Left ventricle myocardium inferior (tissue), 1 donor: ENCODE measurements at regions of chr19 and their contacts with region 1.

Region 1: GRCh38 chr19:39187559-39187957 is 9.2 kb upstream of the NCCRP1 start:
- DNase-seq: no peak
- H3K4me3 ChIP-seq: no peak overlapping the region
- H3K27ac ChIP-seq: no peak overlapping the region
- H3K4me1 ChIP-seq: peaks cover 5% of the 10 kb centered on the region
- H3K27me3 ChIP-seq: peaks cover 57% of the 10 kb centered on the region
- CTCF ChIP-seq: no peak

Region 2: DNA sequence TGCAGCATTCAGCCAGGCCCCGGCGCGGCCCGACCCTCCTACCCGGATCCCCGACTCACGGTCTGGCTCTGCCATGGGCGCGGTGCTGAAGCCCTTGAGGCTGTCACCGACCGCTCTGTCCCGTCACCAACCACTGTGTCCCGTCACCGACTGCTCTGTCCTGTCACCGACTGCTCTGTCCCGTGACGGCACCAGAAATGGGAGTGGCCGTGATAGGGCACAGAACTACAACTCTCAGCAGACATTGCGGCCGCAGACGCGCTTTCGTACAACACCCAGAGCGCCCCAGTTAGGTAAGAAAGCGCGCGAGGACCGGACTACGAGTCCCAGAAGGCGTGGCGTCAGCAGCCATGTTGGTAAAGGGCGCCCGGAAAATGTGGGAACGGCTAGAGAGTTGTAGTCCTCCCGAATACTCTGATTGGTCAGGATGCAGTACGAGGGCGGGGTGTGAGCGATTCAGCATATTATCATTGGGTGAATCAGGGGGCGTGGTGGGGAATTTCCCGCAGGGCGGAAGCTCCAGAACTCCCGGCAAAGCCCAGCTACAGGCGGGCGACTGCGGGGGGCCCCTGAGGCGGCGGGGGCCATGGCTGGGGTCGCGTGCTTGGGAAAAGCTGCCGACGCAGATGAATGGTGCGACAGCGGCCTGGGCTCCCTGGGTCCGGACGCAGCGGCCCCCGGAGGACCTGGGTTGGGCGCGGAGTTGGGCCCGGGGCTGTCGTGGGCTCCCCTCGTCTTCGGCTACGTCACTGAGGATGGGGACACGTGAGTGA is 287.9 kb before region 1 on chr19 and contains the starts of genes NFKBIB and SIRT2:
- intact Hi-C with region 1: no loop called
- DNase-seq: peak; percentile 100
- H3K4me3 ChIP-seq: peak within 1 kb of the TSS; percentile 94
- H3K27ac ChIP-seq: peak within 1 kb of the TSS; percentile 92
- H3K4me1 ChIP-seq: peaks cover 45% of the 10 kb centered on the region
- H3K27me3 ChIP-seq: no peaks in the 10 kb centered on the region
- CTCF ChIP-seq: no peak
- total RNA-seq, gene NFKBIB: 18.4 TPM
- total RNA-seq, gene SIRT2: 99.0 TPM

Region 3: GRCh38 chr19:39110263-39110967 is 77.1 kb before region 1 on chr19:
- intact Hi-C with region 1: no loop called
- DNase-seq: peak; percentile 47
- H3K4me3 ChIP-seq: no peak overlapping the region
- H3K27ac ChIP-seq: no peak overlapping the region
- H3K4me1 ChIP-seq: no peaks in the 10 kb centered on the region
- H3K27me3 ChIP-seq: peaks cover 99% of the 10 kb centered on the region
- CTCF ChIP-seq: peak; percentile 80

Region 4: DNA sequence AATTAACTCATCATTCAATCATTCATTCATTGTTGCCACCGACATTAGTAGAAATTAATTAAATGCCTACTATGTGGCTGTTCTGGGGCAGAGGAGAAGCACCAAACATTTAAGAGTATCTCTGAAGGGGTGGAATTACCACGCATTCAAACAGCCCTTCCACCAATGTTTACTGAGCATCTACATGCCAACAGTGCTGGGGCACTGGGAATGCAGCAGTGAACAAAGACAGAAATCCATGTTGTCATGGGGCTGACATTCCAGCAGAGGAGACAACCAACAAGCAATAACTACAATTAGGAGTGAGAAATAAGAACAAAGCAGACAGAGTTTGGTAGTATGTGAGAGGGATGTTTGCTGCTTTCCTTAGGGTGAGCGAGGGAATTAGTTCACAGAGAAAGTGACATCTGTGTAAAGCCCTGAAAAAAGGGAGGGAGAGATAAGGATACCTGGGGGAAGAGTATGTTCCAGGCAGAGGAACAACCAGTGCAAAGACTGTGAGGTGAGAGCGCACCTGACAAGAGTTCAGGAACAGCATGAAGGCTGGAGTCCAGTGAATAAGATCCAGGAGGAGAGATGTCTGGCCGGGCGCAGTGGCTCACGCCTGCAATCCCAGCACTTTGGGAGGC is 63.3 kb before region 1 on chr19:
- intact Hi-C with region 1: loop called (anchors 2 kb)
- DNase-seq: no peak
- H3K4me3 ChIP-seq: no peak overlapping the region
- H3K27ac ChIP-seq: no peak overlapping the region
- H3K4me1 ChIP-seq: peaks cover 53% of the 10 kb centered on the region
- H3K27me3 ChIP-seq: peaks cover 18% of the 10 kb centered on the region
- CTCF ChIP-seq: no peak